ENCODE measurements at regions of chr3 and their contacts with region 1.

Region 1: GRCh38 chr3:10417849-10418248 is 87.5 kb downstream of the ATP2B2 start:
- DNase-seq: no peak
- ATAC-seq: no peak
- H3K4me3 ChIP-seq: no peak overlapping the region
- H3K27ac ChIP-seq: no peak overlapping the region
- H3K4me1 ChIP-seq: no peaks in the 10 kb centered on the region
- H3K27me3 ChIP-seq: peaks cover 0 to 24% (median 6%) of the 10 kb centered on the region in 7 donors
- CTCF ChIP-seq: peak in 4 of 9 donors; percentile 8 to 18 (median 15)

Region 2: DNA sequence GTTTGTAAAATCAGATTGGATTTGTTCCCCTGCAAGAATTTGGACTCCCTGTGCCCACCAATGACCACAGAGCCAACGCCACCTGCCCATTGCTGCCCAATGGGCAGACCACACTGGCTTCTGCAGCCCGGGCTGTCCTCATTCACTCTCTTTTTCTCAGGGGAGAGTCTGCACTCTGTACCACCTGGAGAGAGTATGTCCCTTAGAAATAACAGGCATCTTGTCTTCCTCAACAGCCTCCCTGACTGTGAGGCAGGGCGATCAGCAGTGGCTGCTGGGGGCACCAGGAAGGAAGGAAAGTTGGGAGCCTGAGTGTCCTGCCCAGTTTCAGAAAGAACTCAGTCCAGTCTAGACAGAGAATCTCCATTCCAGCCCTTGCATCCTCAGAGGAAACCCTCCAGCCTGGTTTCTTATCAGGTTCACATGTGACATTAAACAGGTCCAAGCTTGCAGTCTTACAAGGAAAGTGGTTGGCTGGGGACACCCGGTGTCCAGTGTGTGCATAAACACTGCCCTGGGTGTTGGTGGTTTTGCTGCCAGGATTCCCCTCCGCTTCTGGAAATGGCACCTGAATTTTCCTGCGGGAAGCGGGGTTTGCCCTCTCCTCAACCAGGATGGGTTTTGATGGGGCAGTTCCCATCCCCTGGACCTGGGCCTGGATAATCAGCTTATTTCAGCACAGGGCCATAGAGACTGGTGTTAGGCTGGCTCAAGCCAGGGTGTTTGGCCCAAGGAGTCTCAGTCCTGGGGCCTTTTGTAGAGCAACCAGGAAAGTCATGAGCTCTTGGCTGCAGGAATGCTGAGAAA is 1810.4 kb before region 1 on chr3:
- intact Hi-C with region 1: no loop called
- DNase-seq: peak; percentile 64 to 80
- ATAC-seq: peak; percentile 94 to 99 (median 97)
- H3K4me3 ChIP-seq: no peak overlapping the region
- H3K27ac ChIP-seq: peak overlapping the region in 1 of 10 donors; percentile 59
- H3K4me1 ChIP-seq: peaks cover 11 to 28% (median 17%) of the 10 kb centered on the region in 9 donors
- H3K27me3 ChIP-seq: no peaks in the 10 kb centered on the region
- CTCF ChIP-seq: peak; percentile 61 to 88 (median 79)

Region 3: DNA sequence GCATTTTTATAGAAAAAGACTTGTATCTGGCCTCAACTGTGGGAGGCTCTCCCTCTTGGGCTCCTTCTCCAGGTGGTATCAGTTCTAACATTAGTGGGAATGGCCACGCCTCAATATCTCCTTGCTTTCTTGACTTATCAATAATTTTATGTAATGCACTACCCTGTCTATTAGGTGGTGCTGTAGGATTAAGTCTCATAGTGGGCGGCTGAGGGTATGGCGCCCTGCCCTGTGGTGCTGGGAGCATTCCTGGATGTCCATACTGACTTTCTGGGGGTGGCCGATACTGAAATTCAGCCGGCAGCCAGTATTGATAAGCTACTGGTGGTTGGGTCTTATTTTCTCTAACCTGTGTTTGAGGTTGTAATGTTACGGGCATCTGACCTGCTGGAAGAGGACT is 565.3 kb before region 1 on chr3:
- intact Hi-C with region 1: no loop called
- DNase-seq: no peak
- ATAC-seq: no peak
- H3K4me3 ChIP-seq: no peak overlapping the region
- H3K27ac ChIP-seq: no peak overlapping the region
- H3K4me1 ChIP-seq: peaks cover 0 to 4% (median 0%) of the 10 kb centered on the region in 9 donors
- H3K27me3 ChIP-seq: peaks cover 0 to 4% (median 0%) of the 10 kb centered on the region in 7 donors
- CTCF ChIP-seq: no peak

Region 4: DNA sequence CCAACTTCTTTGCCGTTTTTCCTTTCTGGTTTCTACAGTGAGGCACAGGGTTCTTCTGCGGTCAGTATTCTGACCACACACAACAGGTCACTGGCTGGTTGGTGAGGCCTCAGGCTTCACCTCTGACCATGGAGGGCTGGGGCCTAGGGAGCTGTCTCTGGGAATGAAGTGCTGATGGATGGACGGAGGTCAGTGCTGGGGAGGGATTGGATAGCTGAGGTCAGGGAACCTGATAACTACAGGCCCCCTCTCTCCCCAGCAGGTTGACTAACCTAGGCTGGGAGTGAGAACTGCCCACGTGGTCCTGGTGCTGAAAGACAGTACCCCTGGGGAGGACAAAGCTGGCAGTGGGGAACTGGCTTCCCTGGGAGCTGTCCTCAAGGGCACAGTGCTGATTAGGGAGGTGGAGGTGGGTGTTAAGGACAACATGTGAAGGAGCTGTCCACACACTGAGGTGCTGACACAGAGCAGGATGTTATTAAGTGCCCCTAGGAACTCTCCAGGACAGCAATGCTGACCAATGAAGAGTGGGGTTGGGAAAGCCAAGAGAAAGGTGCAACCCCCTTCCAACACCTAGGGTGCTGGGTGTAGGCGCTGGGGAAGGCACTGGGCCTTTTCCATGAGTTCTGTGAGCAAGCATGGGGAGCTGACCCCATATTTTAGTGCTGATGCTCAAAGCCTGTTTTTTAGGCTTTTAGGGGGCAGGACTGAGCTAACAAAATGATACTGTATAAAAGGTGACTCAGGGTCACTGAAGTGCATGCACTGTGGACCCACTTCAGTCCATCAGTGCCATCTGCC is 42.3 kb after region 1 on chr3:
- intact Hi-C with region 1: no loop called
- DNase-seq: peak in 1 of 2 donors; percentile 66
- ATAC-seq: peak; percentile 38 to 87 (median 82)
- H3K4me3 ChIP-seq: no peak overlapping the region
- H3K27ac ChIP-seq: no peak overlapping the region
- H3K4me1 ChIP-seq: no peaks in the 10 kb centered on the region
- H3K27me3 ChIP-seq: peaks cover 0 to 19% (median 0%) of the 10 kb centered on the region in 7 donors
- CTCF ChIP-seq: no peak

Region 5: DNA sequence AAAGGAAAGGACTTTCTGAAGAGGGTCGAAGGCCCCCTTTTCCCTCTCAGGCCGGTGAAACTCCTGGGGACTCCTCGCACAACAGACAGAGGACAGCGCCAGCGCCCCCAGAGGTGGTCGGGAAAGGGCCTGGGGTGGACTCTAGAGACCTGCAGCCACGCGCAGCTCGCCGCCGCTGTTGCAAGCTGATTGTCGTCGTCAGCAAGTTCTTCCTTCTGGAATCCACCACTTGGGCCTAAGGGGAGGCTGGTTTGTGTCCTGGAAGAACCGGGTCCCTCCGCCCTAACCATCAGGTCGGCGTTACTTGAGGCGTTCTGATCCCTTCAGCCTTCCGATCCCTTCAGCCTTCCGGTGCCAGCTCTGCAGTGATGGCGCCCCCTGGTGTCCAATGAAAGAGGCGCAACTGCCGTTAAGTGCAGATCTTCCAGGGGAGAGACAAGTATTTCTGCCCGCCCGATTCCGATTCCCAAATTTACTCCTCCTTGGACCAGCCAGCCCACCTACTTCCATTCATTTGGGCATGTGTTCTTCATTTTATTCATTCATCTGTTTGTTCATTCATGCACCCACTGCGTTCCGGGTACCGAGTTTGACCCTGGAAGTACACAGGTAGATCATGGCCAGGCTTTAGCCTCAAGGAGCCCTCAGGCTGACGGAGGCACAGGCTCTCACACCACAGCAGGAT is 321.0 kb after region 1 on chr3:
- intact Hi-C with region 1: loop called in 1 of 10 experiments (anchors 5 kb)
- DNase-seq: peak; percentile 57 to 64
- ATAC-seq: peak; percentile 58 to 92 (median 82)
- H3K4me3 ChIP-seq: peak overlapping the region in 7 of 10 donors; percentile 21 to 45 (median 39)
- H3K27ac ChIP-seq: no peak overlapping the region
- H3K4me1 ChIP-seq: peaks cover 0 to 4% (median 0%) of the 10 kb centered on the region in 9 donors
- H3K27me3 ChIP-seq: peaks cover 0 to 74% (median 57%) of the 10 kb centered on the region in 7 donors
- CTCF ChIP-seq: peak; percentile 66 to 89 (median 85)